Activated CD4-positive, alpha-beta memory T cell treated with anti-CD3 and anti-CD28 coated beads for 36 hours (primary cell): ENCODE measurements at regions of chr9 and their contacts with region 1.

Region 1: GRCh38 chr9:84153885-84154284 is 173.3 kb downstream of the RMI1 start:
- DNase-seq: no peak
- H3K4me3 Mint-ChIP-seq: no peak overlapping the region
- H3K27ac Mint-ChIP-seq: no peak overlapping the region
- H3K4me1 Mint-ChIP-seq: no peaks in the 10 kb centered on the region
- H3K27me3 Mint-ChIP-seq: peaks cover 2% of the 10 kb centered on the region

Region 2: GRCh38 chr9:84129529-84130141 is 24.2 kb before region 1 on chr9:
- CTCF ChIA-PET with region 1: no interaction called
- POLR2A ChIA-PET with region 1: no interaction called
- intact Hi-C with region 1: no loop called
- DNase-seq: no peak
- H3K4me3 Mint-ChIP-seq: no peak overlapping the region
- H3K27ac Mint-ChIP-seq: no peak overlapping the region
- H3K4me1 Mint-ChIP-seq: no peaks in the 10 kb centered on the region
- H3K27me3 Mint-ChIP-seq: peaks cover 6% of the 10 kb centered on the region

Region 3: GRCh38 chr9:84170521-84171141 is 16.7 kb after region 1 on chr9:
- CTCF ChIA-PET with region 1: interaction called, 10 read pairs
- POLR2A ChIA-PET with region 1: no interaction called
- intact Hi-C with region 1: no loop called
- DNase-seq: no peak
- H3K4me3 Mint-ChIP-seq: no peak overlapping the region
- H3K27ac Mint-ChIP-seq: no peak overlapping the region
- H3K4me1 Mint-ChIP-seq: no peaks in the 10 kb centered on the region
- H3K27me3 Mint-ChIP-seq: no peaks in the 10 kb centered on the region